Common myeloid progenitor, CD34-positive (primary cell): ENCODE measurements at regions of chr9 and their contacts with region 1.

Region 1: GRCh38 chr9:94681508-94681907 is 42.2 kb upstream of the FBP1 start:
- DNase-seq: peak; percentile 64 to 79 (median 77)
- H3K4me3 ChIP-seq: no peak overlapping the region
- H3K27ac ChIP-seq: no peak overlapping the region
- H3K4me1 ChIP-seq: peaks cover 0 to 1% (median 0%) of the 10 kb centered on the region in 4 experiments
- H3K27me3 ChIP-seq: peaks cover 0 to 13% (median 2%) of the 10 kb centered on the region in 5 experiments

Region 2: GRCh38 chr9:94668418-94668932 is 13.0 kb before region 1 on chr9:
- CTCF ChIA-PET with region 1: interaction called, 26 read pairs
- POLR2A ChIA-PET with region 1: no interaction called
- DNase-seq: no peak
- H3K4me3 ChIP-seq: peak overlapping the region in 5 of 7 experiments; percentile 58 to 83 (median 67)
- H3K27ac ChIP-seq: no peak overlapping the region
- H3K4me1 ChIP-seq: peaks cover 3 to 12% (median 7%) of the 10 kb centered on the region in 4 experiments
- H3K27me3 ChIP-seq: no peaks in the 10 kb centered on the region

Region 3: GRCh38 chr9:95127249-95128176 is 446.0 kb after region 1 on chr9:
- CTCF ChIA-PET with region 1: interaction called, 67 read pairs
- POLR2A ChIA-PET with region 1: no interaction called
- DNase-seq: peak; percentile 61 to 76 (median 75)
- H3K4me3 ChIP-seq: peak overlapping the region in 4 of 7 experiments; percentile 13 to 71 (median 44)
- H3K27ac ChIP-seq: no peak overlapping the region
- H3K4me1 ChIP-seq: peaks cover 0 to 6% (median 1%) of the 10 kb centered on the region in 4 experiments
- H3K27me3 ChIP-seq: no peaks in the 10 kb centered on the region